ENCODE measurements at regions of chr6 and their contacts with region 1.

Region 1: DNA sequence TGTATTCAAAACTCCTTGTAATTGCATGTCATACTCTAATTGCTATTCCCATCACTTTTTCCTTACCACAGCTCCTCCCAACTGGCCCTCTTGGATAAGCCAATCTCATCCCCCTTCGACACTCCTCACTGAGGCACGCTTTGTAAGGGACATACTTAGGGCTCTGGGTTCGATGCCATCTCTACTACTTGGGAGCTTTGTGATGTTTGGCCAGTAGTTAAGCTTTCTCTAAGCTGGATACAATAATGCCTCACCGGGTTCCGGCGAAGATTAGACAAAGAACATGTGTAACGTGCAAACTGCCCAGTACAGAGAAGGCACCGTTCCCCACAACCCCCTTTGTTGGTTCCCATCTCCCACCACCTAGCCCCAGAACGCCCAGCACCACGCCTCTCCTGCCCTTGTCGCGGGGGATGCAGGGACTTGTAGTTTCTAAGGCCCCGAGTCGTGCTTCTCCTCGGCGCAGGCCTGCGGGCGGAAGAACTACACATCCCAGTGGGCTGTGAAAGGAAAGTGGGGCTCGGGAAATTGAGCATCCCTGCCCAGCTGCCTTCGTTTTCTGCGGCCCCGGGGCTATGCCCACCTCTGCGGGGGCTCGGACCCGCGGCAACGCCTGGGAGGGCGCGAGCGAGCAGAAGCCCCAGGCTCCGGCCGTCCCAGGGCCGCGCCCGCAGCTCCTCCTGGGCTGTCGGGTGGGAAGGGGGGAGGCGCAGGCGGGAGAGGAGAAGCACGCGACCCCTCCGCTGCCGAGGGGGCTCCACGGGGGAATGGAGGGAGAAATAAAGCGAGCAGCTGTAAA is 1.1 kb upstream of the ZDHHC14 start:
- DNase-seq: peak; percentile 92
- H3K4me3 Mint-ChIP-seq: peak overlapping the region; percentile 81
- H3K27ac Mint-ChIP-seq: peak overlapping the region; percentile 59
- H3K4me1 Mint-ChIP-seq: peaks cover 36% of the 10 kb centered on the region
- H3K27me3 Mint-ChIP-seq: peaks cover 12% of the 10 kb centered on the region

Region 2: GRCh38 chr6:157368359-157369049 is 11.4 kb before region 1 on chr6:
- CTCF ChIA-PET with region 1: interaction called, 4 read pairs
- intact Hi-C with region 1: loop called (anchors 1 kb)
- DNase-seq: no peak
- H3K4me3 Mint-ChIP-seq: no peak overlapping the region
- H3K27ac Mint-ChIP-seq: no peak overlapping the region
- H3K4me1 Mint-ChIP-seq: peaks cover 20% of the 10 kb centered on the region
- H3K27me3 Mint-ChIP-seq: peaks cover 31% of the 10 kb centered on the region

Region 3: DNA sequence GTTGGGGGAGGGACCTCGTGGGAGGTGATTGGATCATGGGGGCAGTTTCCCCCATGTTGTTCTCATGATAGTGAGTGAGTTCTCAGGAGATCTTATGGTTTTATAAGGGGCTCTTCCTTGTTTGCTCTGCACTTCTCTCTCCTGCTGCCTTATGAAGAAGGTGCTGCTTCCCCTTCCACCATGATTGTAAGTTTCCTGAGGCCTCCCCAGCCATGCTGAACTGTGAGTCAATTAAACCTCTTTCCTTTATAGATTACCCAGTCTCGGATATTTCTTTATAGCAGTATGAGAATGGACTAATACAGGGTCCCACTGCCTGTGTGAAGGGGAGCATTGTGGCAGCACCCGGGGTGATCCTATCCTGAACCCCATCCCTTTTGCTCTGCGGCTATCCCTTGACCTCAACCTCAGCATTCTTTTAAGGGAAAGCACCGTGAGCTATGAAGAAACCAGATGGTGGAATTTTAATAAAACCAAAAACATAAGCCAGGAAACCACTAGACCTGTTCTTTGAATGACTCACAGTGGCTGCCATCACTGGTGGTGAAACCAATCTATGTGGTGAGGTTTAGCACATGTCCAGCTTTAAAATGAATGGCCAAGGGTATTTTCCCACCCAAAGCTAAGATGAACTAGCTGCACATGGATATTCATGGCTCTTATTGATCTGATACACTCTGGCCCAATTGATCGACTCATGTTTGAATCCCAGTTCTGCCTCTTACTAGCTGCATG is 63.4 kb after region 1 on chr6:
- CTCF ChIA-PET with region 1: no interaction called
- intact Hi-C with region 1: no loop called
- DNase-seq: peak; percentile 39
- H3K4me3 Mint-ChIP-seq: no peak overlapping the region
- H3K27ac Mint-ChIP-seq: no peak overlapping the region
- H3K4me1 Mint-ChIP-seq: peaks cover 20% of the 10 kb centered on the region
- H3K27me3 Mint-ChIP-seq: peaks cover 3% of the 10 kb centered on the region

Region 4: GRCh38 chr6:157679605-157680580 is 300.0 kb after region 1 on chr6:
- CTCF ChIA-PET with region 1: no interaction called
- intact Hi-C with region 1: no loop called
- DNase-seq: no peak
- H3K4me3 Mint-ChIP-seq: no peak overlapping the region
- H3K27ac Mint-ChIP-seq: no peak overlapping the region
- H3K4me1 Mint-ChIP-seq: no peaks in the 10 kb centered on the region
- H3K27me3 Mint-ChIP-seq: no peaks in the 10 kb centered on the region

Measured in activated naive CD4-positive, alpha-beta T cell treated with anti-CD3 and anti-CD28 coated beads for 36 hours (primary cell).